Right cardiac atrium (tissue), 5 donors: ENCODE measurements at regions of chr12 and their contacts with region 1.

Region 1: GRCh38 chr12:93894391-93895088 is 217.4 kb downstream of the CRADD start:
- DNase-seq: peak; percentile 93 to 97 (median 96)
- ATAC-seq: peak; percentile 96 to 97
- H3K4me3 ChIP-seq: peak overlapping the region; percentile 6
- H3K27ac ChIP-seq: peak overlapping the region; percentile 96
- H3K4me1 ChIP-seq: peaks cover 11% of the 10 kb centered on the region
- H3K27me3 ChIP-seq: no peaks in the 10 kb centered on the region

Region 2: GRCh38 chr12:93785262-93786010 is 109.1 kb before region 1 on chr12:
- intact Hi-C with region 1: loop called in 1 of 4 experiments (anchors 10 kb)
- DNase-seq: peak in 2 of 3 donors; percentile 50 to 64
- ATAC-seq: peak; percentile 92 to 98
- H3K4me3 ChIP-seq: no peak overlapping the region
- H3K27ac ChIP-seq: peak overlapping the region; percentile 98
- H3K4me1 ChIP-seq: peaks cover 13% of the 10 kb centered on the region
- H3K27me3 ChIP-seq: no peaks in the 10 kb centered on the region

Region 3: DNA sequence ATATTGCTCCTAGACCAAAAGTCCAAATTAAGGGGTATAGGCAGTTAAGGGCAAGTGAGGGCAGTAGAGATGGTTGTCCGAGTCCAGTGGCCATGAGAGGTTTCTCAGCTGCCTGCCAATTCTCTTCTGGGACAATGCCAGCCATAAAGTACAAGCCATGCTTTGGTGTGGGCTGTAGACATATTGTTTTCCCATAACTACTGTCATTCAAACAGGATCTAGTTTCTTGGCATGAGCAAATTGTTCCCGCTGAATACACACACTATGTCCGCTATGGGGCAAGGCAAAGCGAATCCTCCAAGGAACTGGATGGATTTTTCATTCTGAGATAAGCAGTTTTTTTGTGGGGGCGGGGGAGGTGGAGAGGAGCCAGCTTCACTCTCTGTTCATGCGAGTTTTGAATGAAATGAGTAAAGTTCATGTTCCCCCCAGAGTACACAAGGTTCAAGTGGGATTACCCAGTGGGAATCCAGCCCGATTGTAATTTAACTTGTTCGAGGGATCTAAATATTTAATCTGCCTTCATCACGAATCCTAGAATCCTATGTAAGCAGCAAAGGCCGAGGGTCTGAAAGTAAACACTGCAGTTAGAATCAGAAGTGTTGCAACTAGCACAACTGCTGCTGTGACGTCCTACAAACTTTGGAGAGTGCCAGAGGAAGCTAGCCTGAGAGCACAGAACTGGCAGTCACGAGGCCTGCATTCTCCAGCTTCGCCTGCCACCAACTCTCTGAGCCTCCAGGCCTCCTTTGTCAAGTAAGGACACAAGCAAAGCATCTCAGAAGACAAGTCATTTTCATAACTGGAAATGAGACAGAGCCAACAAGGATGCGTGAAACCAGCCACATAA is 80.3 kb before region 1 on chr12:
- intact Hi-C with region 1: loop called in 2 of 4 experiments (anchors 10 kb)
- DNase-seq: peak; percentile 86 to 93 (median 91)
- ATAC-seq: peak; percentile 92 to 93
- H3K4me3 ChIP-seq: no peak overlapping the region
- H3K27ac ChIP-seq: peak overlapping the region; percentile 100
- H3K4me1 ChIP-seq: peaks cover 26% of the 10 kb centered on the region
- H3K27me3 ChIP-seq: no peaks in the 10 kb centered on the region

Region 4: DNA sequence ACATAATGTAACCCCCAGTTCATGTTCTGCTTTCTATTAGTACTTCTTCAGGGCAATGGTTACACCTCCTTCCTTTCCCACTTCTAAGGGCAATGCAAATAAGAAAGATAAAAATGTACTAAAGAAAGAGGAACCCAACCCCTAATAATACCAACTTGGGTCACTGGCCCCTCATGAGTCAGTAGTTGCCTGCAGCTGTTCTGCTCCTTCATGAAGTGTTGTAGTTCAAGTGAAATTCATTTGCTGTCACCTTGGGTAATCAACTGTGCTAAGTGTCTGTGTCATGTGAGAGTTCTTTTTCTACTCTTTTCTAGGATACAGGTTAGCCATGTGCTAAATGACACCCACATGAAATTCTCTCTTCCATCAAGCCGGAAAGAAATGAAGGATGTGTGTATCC is 345.6 kb after region 1 on chr12:
- intact Hi-C with region 1: no loop called
- DNase-seq: no peak
- ATAC-seq: no peak
- H3K4me3 ChIP-seq: no peak overlapping the region
- H3K27ac ChIP-seq: no peak overlapping the region
- H3K4me1 ChIP-seq: no peaks in the 10 kb centered on the region
- H3K27me3 ChIP-seq: no peaks in the 10 kb centered on the region